ENCODE measurements at regions of chr5 and their contacts with region 1.

Region 1: DNA sequence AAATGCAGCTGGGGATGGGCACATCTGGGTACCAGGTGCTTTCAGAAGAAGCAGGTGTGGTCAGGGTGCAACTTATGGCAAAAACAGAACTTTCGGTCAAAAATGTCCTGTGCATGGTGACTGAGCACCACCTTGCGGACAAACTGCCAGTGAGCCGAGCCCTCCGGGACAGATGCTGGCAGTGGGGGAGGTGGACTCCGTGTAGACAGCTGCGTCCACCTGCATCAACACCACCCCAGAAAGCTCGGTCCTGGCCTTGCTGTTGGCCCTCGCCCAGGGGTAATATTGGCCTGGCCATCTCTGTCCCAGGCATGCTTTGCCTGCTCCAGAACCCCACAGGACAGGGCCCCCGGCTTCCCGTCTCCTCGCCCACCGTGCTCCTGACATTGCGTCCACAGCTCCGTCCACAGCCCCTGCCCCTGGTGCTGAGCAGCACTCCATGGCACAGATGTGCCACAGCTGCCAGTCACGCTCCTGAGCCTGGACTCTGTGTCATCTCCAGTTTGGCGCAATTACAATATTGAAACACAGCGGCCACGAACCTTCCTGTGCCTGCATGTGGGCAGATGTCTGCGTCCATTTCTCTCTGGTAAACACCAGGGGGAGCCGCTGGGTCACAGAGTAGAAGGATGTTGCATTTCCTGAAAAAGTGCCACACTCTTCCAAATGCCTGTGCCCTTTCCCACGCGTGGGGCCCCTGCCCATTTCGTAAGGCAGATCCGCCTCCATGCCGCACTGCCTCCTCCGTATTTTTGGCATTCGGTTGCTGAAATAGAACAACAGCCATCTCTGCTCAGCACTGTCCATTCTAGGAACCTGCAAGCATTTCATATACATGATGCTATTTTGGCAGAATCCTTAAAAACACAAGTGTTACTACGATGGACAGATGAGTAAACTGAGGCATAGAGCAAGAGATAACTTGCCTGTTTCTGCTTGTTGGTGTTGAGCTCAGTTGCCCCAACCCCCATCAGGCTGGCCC is 33.4 kb upstream of the SLC6A19 start:
- DNase-seq: peak; percentile 87

Region 2: GRCh38 chr5:932628-933250 is 235.3 kb before region 1 on chr5:
- intact Hi-C with region 1: loop called in 1 of 2 experiments (anchors 10 kb)
- DNase-seq: peak; percentile 68

Region 3: DNA sequence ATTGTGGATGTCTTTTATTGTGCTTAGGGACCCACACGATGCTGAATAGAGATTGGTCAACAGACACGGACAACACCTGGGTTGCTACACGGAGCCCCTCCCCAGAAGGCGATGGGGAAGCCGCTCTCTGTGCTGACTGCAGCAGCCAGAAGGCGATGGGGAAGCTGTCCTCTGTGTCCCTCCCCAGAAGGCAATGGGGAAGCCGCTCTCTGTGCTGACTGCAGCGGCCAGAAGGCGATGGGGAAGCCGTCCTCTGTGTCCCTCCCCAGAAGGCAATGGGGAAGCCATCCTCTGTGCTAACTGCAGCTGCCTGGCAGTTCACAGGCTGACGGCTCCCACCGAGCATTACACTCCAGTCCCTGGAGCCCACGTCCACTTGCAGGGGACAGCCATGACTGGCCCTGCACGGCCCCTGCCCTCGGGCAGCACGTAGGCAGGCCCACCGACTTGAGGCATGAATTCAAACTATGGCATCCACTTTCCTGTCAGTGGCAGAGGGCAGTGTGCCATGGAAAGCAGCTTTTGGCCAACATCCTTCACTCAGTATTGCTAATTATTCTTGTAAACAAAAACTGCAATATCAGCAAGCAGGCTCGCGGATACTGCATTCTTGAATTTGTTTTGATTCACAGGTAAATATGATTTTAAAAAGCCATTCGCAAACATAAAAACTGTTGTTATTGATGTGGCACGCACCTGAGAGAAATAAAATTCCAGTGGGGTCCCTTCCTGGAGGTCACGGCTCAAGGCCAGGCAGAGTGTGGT is 225.0 kb after region 1 on chr5:
- intact Hi-C with region 1: no loop called
- DNase-seq: no peak